Natural killer cell (primary cell): ENCODE measurements at regions of chr1 and their contacts with region 1.

Region 1: DNA sequence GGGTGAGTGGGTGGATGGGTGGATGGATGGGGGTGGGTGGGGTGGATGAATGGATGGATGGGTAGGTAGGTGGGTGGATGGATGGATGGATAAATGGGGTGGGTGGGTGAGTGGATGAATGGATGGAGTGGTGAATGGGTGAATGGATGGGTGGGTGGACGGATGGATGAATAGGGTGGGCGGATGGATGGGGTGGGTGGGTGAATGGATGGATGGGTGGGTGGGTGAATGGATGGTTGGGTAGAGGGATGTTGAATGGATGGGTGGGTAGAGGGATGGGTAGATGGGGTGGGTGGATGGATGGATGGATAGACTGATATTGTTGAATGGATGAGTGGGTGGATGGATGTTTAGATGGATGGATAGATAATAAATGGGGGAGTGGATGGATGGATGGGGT is 26.9 kb upstream of the CCDC27 start:
- DNase-seq: no peak
- ATAC-seq: no peak
- H3K4me3 ChIP-seq: no peak overlapping the region
- H3K4me3 Mint-ChIP-seq: no peak overlapping the region
- H3K27ac ChIP-seq: no peak overlapping the region
- H3K27ac Mint-ChIP-seq: no peak overlapping the region
- H3K4me1 ChIP-seq: peaks cover 9% of the 10 kb centered on the region
- H3K4me1 Mint-ChIP-seq: peaks cover 0 to 9% of the 10 kb centered on the region in 2 donors
- H3K27me3 ChIP-seq: no peaks in the 10 kb centered on the region
- H3K27me3 Mint-ChIP-seq: no peaks in the 10 kb centered on the region
- CTCF ChIP-seq: no peak

Region 2: DNA sequence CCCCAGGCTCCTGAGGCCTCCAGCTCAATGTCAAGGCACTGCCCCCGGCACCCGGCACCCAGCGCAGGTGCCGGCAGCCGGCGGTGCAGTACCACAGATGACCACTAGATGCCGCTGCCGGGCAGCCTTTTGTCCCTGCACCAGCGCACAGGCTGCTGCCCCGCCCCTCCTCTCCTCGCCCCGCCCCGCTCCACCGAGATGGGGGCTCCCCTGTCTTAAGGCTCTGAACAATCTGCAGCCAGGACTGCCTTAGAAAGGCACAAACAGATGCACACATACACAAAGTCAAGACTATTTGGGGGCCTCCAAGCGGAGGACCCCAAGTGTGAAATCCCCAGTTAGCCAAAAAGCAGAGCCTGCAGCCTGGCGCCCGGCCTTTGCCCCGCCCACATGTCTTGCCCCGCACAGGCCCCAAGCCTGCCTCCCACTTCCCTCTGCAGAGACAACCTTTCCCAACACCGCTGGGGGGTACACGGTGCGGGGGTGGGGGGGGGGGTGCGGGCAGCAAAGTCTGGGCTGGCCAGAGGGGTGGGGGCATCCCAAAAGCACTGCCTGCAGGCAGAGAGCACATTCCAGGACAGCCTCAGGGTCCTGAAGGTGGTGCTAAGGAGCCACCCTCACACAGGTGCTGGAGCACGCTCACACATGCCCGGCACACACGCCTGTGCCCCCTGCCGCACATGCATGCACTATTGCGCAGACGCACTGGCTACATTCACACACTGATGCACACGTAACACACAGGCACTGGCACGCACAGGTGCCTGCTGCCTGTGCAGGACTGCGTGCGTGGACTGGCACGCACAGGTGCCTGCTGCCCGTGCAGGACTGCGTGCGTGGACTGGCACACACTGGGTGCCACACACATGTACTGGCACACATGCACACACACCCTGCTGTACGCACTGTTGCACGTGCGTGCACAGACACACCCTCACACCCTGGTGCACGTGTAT is 233.8 kb before region 1 on chr1:
- intact Hi-C with region 1: loop called (anchors 2 kb)
- DNase-seq: peak; percentile 84 to 88
- ATAC-seq: peak; percentile 94 to 99 (median 98)
- H3K4me3 ChIP-seq: no peak overlapping the region
- H3K4me3 Mint-ChIP-seq: no peak overlapping the region
- H3K27ac ChIP-seq: no peak overlapping the region
- H3K27ac Mint-ChIP-seq: no peak overlapping the region
- H3K4me1 ChIP-seq: peaks cover 6% of the 10 kb centered on the region
- H3K4me1 Mint-ChIP-seq: peaks cover 6 to 7% of the 10 kb centered on the region in 2 donors
- H3K27me3 ChIP-seq: no peaks in the 10 kb centered on the region
- H3K27me3 Mint-ChIP-seq: peaks cover 0 to 4% of the 10 kb centered on the region in 2 donors
- CTCF ChIP-seq: peak; percentile 99

Region 3: GRCh38 chr1:3668585-3669300 is 56.6 kb before region 1 on chr1:
- intact Hi-C with region 1: no loop called
- DNase-seq: no peak
- ATAC-seq: no peak
- H3K4me3 ChIP-seq: no peak overlapping the region
- H3K4me3 Mint-ChIP-seq: no peak overlapping the region
- H3K27ac ChIP-seq: no peak overlapping the region
- H3K27ac Mint-ChIP-seq: no peak overlapping the region
- H3K4me1 ChIP-seq: peaks cover 27% of the 10 kb centered on the region
- H3K4me1 Mint-ChIP-seq: peaks cover 0 to 4% of the 10 kb centered on the region in 2 donors
- H3K27me3 ChIP-seq: no peaks in the 10 kb centered on the region
- H3K27me3 Mint-ChIP-seq: peaks cover 7 to 10% of the 10 kb centered on the region in 2 donors
- CTCF ChIP-seq: no peak

Region 4: DNA sequence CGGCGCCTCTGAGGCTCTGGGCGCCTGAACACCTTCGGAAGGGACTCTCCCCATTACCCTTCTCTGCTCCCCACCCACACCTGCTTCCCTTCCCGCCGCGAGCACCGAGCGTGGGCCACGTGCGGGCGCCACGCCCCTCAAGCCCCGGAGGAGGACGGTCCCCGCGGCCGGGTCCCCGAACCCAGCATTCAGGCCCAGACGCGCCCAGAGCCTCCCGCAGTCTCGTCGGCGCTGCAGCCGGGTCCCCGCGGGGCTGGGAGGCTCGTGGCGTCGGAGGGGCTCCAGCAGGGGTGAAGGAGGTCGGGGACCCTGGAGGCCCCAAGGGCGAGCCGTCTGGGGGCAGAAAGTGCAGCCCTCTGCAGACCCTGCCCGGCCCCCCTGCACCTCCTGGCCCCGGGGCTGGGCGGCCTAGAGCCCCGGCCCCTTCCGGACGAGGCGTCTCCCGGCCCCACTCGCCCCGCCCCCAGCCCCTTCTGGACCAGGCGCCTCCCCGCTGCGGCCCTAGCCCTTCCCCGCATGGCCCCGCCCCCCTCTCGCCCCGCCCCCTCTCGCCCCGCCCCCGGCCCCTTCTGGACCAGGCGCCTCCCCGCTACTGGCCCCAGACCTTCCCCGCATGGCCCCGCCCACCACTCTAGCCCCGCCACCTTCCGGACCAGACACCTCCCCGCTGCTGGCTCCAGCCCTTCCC is 46.8 kb after region 1 on chr1:
- intact Hi-C with region 1: no loop called
- DNase-seq: peak; percentile 77 to 89
- ATAC-seq: peak; percentile 90 to 93 (median 93)
- H3K4me3 ChIP-seq: peak overlapping the region; percentile 43
- H3K4me3 Mint-ChIP-seq: peak overlapping the region; percentile 57
- H3K27ac ChIP-seq: no peak overlapping the region
- H3K27ac Mint-ChIP-seq: no peak overlapping the region
- H3K4me1 ChIP-seq: peaks cover 31% of the 10 kb centered on the region
- H3K4me1 Mint-ChIP-seq: peaks cover 0 to 16% of the 10 kb centered on the region in 2 donors
- H3K27me3 ChIP-seq: no peaks in the 10 kb centered on the region
- H3K27me3 Mint-ChIP-seq: no peaks in the 10 kb centered on the region
- CTCF ChIP-seq: no peak

Region 5: DNA sequence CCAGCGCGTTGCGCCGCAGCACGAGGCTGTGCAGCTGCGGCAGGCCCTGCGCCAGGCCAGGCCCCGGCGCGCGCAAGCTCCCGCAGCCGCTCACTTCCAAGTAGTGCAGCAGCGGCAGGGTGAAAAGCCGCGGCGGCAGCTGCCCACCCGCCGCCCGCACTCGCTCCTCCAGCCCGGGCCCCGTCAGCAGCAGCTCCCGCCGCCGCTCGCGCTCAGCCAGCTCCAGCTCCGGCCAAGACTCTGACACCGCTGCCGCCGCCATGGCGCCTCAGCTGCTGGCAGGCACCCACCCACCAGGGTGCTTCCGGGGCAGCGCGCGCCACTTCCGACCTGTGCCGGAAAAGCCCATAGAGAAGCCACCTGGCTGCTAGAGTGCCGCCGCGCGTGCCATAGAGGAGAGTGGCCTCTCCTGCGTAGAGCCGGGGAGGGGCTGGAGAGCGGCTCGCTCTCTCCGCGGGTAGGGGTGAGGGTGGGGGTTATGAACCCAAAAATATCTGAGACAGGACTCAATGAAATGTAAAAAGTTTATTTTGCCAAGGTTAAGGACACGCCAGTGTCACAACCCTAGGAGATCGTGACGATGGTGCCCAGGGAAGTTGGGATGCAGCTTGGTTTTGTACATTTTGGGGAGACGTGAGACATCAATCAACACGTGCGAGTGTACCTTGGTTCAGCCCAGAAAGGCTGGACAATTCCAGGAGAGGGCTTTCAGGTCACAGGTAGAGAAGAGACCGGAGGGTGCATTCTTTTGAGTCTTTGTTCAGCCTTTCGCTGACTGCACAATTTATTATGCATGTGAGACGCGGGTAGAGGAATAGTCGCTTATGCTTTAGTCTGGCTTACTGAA is 71.1 kb after region 1 on chr1 and contains the start of gene LRRC47:
- intact Hi-C with region 1: no loop called
- DNase-seq: peak; percentile 92 to 95
- ATAC-seq: peak; percentile 99 to 100 (median 99)
- H3K4me3 ChIP-seq: peak within 1 kb of the TSS; percentile 44
- H3K4me3 Mint-ChIP-seq: peak within 1 kb of the TSS; percentile 90
- H3K27ac ChIP-seq: peak within 1 kb of the TSS; percentile 61
- H3K27ac Mint-ChIP-seq: peak within 1 kb of the TSS; percentile 61 to 85
- H3K4me1 ChIP-seq: peaks cover 33% of the 10 kb centered on the region
- H3K4me1 Mint-ChIP-seq: peaks cover 18 to 38% of the 10 kb centered on the region in 2 donors
- H3K27me3 ChIP-seq: no peaks in the 10 kb centered on the region
- H3K27me3 Mint-ChIP-seq: peaks cover 0 to 5% of the 10 kb centered on the region in 2 donors
- CTCF ChIP-seq: no peak
- total RNA-seq, gene LRRC47: 33.5 to 49.8 (median 45.2) TPM

Region 6: GRCh38 chr1:3910857-3911845 is 185.8 kb after region 1 on chr1:
- intact Hi-C with region 1: no loop called
- DNase-seq: peak; percentile 61 to 87
- ATAC-seq: peak; percentile 59 to 92 (median 87)
- H3K4me3 ChIP-seq: no peak overlapping the region
- H3K4me3 Mint-ChIP-seq: no peak overlapping the region
- H3K27ac ChIP-seq: no peak overlapping the region
- H3K27ac Mint-ChIP-seq: no peak overlapping the region
- H3K4me1 ChIP-seq: peaks cover 8% of the 10 kb centered on the region
- H3K4me1 Mint-ChIP-seq: no peaks in the 10 kb centered on the region
- H3K27me3 ChIP-seq: peaks cover 3% of the 10 kb centered on the region
- H3K27me3 Mint-ChIP-seq: peaks cover 0 to 11% of the 10 kb centered on the region in 2 donors
- CTCF ChIP-seq: peak; percentile 65